ENCODE measurements at regions of chr2 and their contacts with region 1.

Region 1: DNA sequence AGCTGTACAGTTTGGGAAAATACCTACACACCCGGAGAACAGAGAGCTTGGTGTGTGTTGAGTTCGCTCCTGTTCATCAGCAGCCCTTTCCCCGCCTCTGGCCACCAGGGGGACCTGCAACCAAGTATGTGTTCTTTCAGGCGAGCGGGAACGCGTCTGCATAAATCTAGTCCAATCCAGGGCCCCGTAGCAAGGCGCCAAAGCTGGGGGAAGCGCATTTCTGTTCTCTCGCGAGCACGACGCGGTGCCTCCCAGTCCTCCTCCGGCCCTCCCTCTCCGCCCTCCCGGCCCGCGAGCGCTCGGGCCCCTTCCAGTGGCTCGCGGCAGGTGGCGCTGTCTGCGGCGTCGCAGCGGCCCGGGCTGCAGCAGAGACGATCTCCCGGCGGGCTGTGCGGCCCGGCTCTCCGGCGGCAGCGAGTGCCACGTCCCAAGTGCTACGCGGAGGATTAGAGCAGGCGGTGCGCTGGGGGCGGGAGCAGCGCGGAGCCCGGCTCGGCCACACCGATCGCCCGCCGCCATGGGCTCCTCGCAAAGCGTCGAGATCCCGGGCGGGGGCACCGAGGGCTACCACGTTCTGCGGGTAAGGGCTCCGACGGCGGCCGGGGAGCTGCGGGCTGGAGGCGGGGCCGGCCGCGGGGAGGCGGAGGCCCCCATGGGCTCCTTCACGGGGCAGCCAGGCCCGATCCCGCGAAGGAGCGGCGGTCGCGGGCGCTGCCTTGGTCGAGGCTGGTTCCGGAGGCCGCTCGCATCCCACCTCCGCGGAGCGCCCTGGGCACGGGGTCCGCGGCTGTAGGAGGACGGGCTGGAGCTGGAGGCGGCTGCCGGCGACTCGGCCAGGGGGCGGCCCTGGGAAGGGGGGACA is at the start of gene GORASP2:
- DNase-seq: peak; percentile 100
- H3K4me3 Mint-ChIP-seq: peak within 1 kb of the TSS; percentile 86
- H3K27ac Mint-ChIP-seq: peak within 1 kb of the TSS; percentile 99
- H3K4me1 Mint-ChIP-seq: peaks cover 29% of the 10 kb centered on the region
- H3K27me3 Mint-ChIP-seq: no peaks in the 10 kb centered on the region
- CTCF ChIP-seq: peak; percentile 85
- total RNA-seq, gene GORASP2: 140 and 168 TPM in 2 replicates

Region 2: GRCh38 chr2:170895023-170895757 is 33.9 kb before region 1 on chr2:
- CTCF ChIA-PET with region 1: interaction called, 12 read pairs
- POLR2A ChIA-PET with region 1: interaction called, 21 read pairs
- intact Hi-C with region 1: no loop called
- DNase-seq: peak; percentile 25
- H3K4me3 Mint-ChIP-seq: no peak overlapping the region
- H3K27ac Mint-ChIP-seq: no peak overlapping the region
- H3K4me1 Mint-ChIP-seq: peaks cover 8% of the 10 kb centered on the region
- H3K27me3 Mint-ChIP-seq: no peaks in the 10 kb centered on the region
- CTCF ChIP-seq: no peak

Region 3: DNA sequence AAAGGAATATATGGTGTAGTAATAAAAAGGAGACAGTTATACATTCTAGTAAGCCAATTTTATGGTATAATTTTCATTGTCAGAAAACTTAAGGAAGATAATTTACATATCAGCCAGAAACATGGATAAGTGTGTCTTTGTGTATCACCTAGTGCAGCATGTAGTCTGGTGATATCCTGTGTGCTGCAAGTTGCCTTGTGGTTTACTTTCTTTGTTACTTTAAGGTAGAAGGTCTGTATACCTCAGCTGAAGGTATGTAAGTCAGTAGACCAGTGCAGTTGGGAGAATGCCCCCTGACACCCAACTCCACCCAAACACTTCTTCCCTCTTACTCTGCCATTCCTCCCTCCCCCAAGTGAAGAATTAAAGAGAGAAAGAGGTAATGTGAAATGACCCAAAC is 11.0 kb after region 1 on chr2:
- CTCF ChIA-PET with region 1: interaction called, 15 read pairs
- POLR2A ChIA-PET with region 1: interaction called, 38 read pairs
- intact Hi-C with region 1: no loop called
- DNase-seq: no peak
- H3K4me3 Mint-ChIP-seq: no peak overlapping the region
- H3K27ac Mint-ChIP-seq: peak overlapping the region; percentile 44
- H3K4me1 Mint-ChIP-seq: peaks cover 32% of the 10 kb centered on the region
- H3K27me3 Mint-ChIP-seq: no peaks in the 10 kb centered on the region
- CTCF ChIP-seq: no peak

Region 4: DNA sequence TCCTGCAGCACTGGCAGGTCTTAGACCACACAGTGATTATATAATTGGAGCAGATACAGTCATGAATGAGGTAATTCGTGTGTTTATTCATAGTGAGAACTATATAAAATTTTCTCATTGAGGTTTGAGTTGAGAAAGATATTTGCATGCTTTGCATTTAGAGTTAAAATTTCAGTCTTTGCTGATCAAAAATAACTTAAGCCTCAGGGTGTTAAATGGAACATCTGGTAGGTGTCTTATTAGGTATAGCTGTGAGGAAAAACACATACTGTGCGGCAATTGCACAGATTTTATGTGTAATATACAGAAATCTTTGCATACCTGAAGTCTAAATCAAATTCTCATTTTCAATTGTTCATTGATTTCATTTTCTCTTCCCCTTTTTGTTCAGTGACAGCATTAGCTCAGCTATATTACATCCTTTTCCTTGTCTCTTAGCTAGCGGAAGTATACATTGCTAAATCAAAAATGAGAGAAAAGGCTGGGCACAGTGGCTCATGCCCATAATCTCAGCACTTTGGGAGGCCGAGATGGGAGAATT is 21.2 kb after region 1 on chr2:
- CTCF ChIA-PET with region 1: interaction called, 7 read pairs
- POLR2A ChIA-PET with region 1: interaction called, 38 read pairs
- intact Hi-C with region 1: no loop called
- DNase-seq: no peak
- H3K4me3 Mint-ChIP-seq: no peak overlapping the region
- H3K27ac Mint-ChIP-seq: no peak overlapping the region
- H3K4me1 Mint-ChIP-seq: peaks cover 13% of the 10 kb centered on the region
- H3K27me3 Mint-ChIP-seq: no peaks in the 10 kb centered on the region
- CTCF ChIP-seq: no peak

Region 5: GRCh38 chr2:171407030-171407675 is 478.1 kb after region 1 on chr2:
- CTCF ChIA-PET with region 1: interaction called, 5 read pairs
- POLR2A ChIA-PET with region 1: interaction called, 25 read pairs
- intact Hi-C with region 1: no loop called
- DNase-seq: no peak
- H3K4me3 Mint-ChIP-seq: no peak overlapping the region
- H3K27ac Mint-ChIP-seq: no peak overlapping the region
- H3K4me1 Mint-ChIP-seq: peaks cover 59% of the 10 kb centered on the region
- H3K27me3 Mint-ChIP-seq: no peaks in the 10 kb centered on the region
- CTCF ChIP-seq: no peak

Region 6: GRCh38 chr2:171433763-171434670 is 505.0 kb after region 1 on chr2 and contains the starts of genes DCAF17 and METTL8:
- CTCF ChIA-PET with region 1: interaction called, 5 read pairs
- POLR2A ChIA-PET with region 1: interaction called, 52 read pairs
- intact Hi-C with region 1: loop called (anchors 2 kb)
- DNase-seq: peak; percentile 97
- H3K4me3 Mint-ChIP-seq: peak within 1 kb of the TSS; percentile 98
- H3K27ac Mint-ChIP-seq: peak within 1 kb of the TSS; percentile 93
- H3K4me1 Mint-ChIP-seq: peaks cover 17% of the 10 kb centered on the region
- H3K27me3 Mint-ChIP-seq: no peaks in the 10 kb centered on the region
- CTCF ChIP-seq: peak; percentile 10
- total RNA-seq, gene DCAF17: 20.8 and 21.3 TPM in 2 replicates
- total RNA-seq, gene METTL8: 28.4 and 55.1 TPM in 2 replicates

Region 7: DNA sequence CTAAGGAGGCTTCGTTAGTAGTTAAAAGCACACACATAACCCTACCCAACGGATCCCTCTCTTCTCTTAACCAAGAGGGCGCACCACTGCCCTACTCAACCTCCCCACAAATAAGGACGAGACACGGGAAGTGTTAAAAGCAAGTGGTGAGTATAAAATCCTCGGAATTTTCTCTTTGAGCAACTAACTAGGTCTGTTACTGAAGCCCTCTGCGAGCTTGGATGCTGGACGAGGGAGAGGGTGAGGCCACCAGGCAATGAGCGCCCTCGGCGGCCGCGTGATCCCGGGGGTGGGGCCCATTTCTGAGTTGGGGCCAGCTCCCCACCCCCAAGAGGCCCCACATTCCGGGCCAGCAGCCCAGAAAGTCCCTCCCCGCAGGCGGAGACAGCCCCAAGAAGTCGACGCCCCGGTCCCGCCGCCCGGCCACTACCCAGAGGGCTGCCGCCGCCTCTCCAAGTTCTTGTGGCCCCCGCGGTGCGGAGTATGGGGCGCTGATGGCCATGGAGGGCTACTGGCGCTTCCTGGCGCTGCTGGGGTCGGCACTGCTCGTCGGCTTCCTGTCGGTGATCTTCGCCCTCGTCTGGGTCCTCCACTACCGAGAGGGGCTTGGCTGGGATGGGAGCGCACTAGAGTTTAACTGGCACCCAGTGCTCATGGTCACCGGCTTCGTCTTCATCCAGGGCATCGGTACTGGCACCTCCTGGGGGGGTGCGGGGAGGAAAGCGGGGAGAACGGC is 593.2 kb after region 1 on chr2 and contains the start of gene CYBRD1:
- CTCF ChIA-PET with region 1: interaction called, 4 read pairs
- POLR2A ChIA-PET with region 1: interaction called, 11 read pairs
- intact Hi-C with region 1: no loop called
- DNase-seq: peak; percentile 74
- H3K4me3 Mint-ChIP-seq: peak within 1 kb of the TSS; percentile 85
- H3K27ac Mint-ChIP-seq: peak within 1 kb of the TSS; percentile 55
- H3K4me1 Mint-ChIP-seq: peaks cover 15% of the 10 kb centered on the region
- H3K27me3 Mint-ChIP-seq: no peaks in the 10 kb centered on the region
- CTCF ChIP-seq: no peak
- total RNA-seq, gene CYBRD1: 8.9 and 15.8 TPM in 2 replicates

Measured in MCF 10A (cell line).